Activated CD4-positive, alpha-beta memory T cell treated with anti-CD3 and anti-CD28 coated beads for 36 hours (primary cell): ENCODE measurements at regions of chr3 and their contacts with region 1.

Region 1: GRCh38 chr3:151086484-151087456 is 1.3 kb downstream of the MED12L start:
- DNase-seq: peak; percentile 86
- H3K4me3 Mint-ChIP-seq: peak overlapping the region; percentile 80
- H3K27ac Mint-ChIP-seq: no peak overlapping the region
- H3K4me1 Mint-ChIP-seq: peaks cover 11% of the 10 kb centered on the region
- H3K27me3 Mint-ChIP-seq: peaks cover 27% of the 10 kb centered on the region

Region 2: GRCh38 chr3:150528354-150528797 is 558.4 kb before region 1 on chr3:
- CTCF ChIA-PET with region 1: no interaction called
- POLR2A ChIA-PET with region 1: no interaction called
- intact Hi-C with region 1: loop called (anchors 2 kb)
- DNase-seq: no peak
- H3K4me3 Mint-ChIP-seq: no peak overlapping the region
- H3K27ac Mint-ChIP-seq: no peak overlapping the region
- H3K4me1 Mint-ChIP-seq: peaks cover 6% of the 10 kb centered on the region
- H3K27me3 Mint-ChIP-seq: no peaks in the 10 kb centered on the region

Region 3: DNA sequence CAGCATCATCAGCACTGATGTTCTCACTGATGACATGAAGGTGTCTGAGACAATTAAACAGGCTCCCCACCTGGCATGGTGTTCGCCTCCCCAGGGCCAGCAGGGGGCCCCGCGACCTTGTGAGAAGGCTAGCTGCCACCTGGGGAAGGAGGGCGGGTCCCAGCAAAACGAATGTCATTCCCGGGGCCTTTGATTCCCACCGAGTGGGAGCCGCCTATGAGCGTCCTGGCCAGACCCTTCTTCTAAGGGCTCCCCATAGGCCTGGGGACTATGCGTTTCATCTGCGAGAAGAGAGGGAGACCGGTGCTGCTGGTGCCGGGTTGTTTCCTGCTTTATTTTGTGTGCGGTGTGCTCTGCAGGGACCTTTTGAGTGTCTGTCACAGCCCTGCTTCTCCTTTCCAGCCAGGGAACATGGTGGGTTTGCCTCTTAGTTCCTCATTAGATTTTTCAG is 161.0 kb before region 1 on chr3:
- CTCF ChIA-PET with region 1: interaction called, 17 read pairs
- POLR2A ChIA-PET with region 1: no interaction called
- intact Hi-C with region 1: loop called (anchors 1 kb)
- DNase-seq: peak; percentile 68
- H3K4me3 Mint-ChIP-seq: no peak overlapping the region
- H3K27ac Mint-ChIP-seq: no peak overlapping the region
- H3K4me1 Mint-ChIP-seq: peaks cover 2% of the 10 kb centered on the region
- H3K27me3 Mint-ChIP-seq: peaks cover 11% of the 10 kb centered on the region

Region 4: DNA sequence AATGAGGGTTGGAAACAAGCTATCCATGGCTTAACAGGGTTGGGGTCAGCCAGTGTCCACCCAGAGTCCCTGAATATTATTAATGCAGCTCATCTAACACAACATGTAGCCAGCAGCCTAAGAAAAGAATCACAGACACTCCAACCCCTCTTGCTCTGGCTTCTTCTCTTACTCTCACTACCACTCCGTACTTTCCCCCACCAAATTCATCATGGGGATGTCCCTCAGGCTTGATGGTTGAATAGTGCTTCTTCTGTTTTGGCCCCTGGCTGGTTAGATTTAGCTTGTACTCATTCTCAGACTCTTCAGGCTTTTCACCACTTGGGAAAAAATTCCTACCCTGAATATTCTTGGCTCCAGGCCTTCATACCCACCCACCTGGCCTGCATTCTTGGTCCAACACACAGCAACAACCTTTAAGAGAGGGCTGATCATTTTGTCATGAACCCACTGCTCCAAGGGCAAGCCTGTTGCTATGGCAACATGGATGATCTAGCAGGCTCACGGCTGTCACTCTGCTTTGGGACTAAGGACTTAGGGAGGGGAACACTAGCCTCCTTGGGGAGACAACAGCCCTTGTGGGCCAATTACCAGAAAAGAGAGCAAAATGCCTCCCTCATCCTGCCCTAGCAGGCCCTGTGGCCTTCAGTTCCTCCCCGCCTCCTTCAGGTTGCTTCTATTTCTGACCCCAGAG is 10.8 kb before region 1 on chr3:
- CTCF ChIA-PET with region 1: interaction called, 11 read pairs
- POLR2A ChIA-PET with region 1: no interaction called
- intact Hi-C with region 1: no loop called
- DNase-seq: no peak
- H3K4me3 Mint-ChIP-seq: no peak overlapping the region
- H3K27ac Mint-ChIP-seq: no peak overlapping the region
- H3K4me1 Mint-ChIP-seq: no peaks in the 10 kb centered on the region
- H3K27me3 Mint-ChIP-seq: peaks cover 2% of the 10 kb centered on the region

Region 5: DNA sequence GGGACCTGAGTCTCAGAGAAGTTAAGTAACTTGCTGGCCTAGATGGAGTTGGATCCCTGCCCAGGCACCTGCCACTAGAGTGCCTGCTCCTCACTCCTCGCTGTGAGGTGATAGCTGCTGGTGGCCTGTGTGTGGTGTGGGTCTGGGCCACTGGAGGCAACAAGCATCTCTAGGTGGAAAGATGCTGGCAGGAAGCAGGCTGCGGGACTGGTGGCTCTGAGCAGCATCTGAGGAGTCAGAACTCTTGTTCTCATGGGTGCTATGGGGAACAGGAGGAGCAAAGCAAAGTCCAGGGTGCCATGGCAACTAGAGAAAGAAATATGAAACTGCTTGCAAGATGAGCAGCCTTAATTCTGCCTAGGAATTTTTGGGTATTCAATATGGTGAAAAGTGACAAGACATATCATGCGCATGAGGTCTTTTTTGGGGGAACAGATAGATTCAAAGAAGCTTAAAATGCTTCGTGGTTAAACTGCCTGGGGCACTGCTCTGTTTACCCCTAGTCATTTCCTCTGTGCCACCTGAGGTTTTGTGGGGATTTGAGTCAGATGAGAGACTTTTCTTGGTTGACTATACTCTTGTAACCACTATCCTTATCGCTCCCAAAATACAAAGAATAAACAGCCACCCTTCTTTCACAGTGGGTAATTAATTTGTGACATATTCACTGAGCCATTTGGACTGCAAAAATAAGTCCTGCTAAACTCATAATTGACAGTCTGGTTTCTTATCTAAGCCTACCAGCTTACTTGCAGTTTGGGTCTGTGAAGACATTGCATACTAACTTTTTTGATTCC is 49.0 kb after region 1 on chr3:
- CTCF ChIA-PET with region 1: interaction called, 19 read pairs
- POLR2A ChIA-PET with region 1: no interaction called
- intact Hi-C with region 1: loop called (anchors 1 kb)
- DNase-seq: peak; percentile 76
- H3K4me3 Mint-ChIP-seq: peak overlapping the region; percentile 4
- H3K27ac Mint-ChIP-seq: peak overlapping the region; percentile 75
- H3K4me1 Mint-ChIP-seq: peaks cover 23% of the 10 kb centered on the region
- H3K27me3 Mint-ChIP-seq: no peaks in the 10 kb centered on the region

Region 6: GRCh38 chr3:151146071-151146730 is 59.4 kb after region 1 on chr3:
- CTCF ChIA-PET with region 1: interaction called, 31 read pairs
- POLR2A ChIA-PET with region 1: no interaction called
- intact Hi-C with region 1: loop called (anchors 1 kb)
- DNase-seq: peak; percentile 70
- H3K4me3 Mint-ChIP-seq: no peak overlapping the region
- H3K27ac Mint-ChIP-seq: no peak overlapping the region
- H3K4me1 Mint-ChIP-seq: no peaks in the 10 kb centered on the region
- H3K27me3 Mint-ChIP-seq: no peaks in the 10 kb centered on the region

Region 7: DNA sequence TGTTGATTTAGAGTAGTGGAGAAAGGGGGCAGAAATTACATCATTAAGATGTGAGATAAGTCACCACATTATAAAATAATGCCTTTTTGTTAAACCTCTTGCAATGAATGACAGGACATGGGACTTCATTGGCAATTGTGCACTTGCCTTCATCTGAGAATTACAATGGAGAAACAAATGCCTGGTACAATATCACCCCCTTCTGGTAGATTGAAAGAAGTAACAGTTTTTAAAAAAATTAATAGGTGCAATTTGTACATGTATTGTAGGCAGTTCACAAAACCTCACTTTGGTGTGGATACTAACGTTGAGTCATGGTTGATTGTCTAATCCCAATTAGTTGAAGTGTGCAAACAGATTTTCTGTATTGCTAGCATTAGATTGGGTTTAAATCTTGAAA is 196.2 kb after region 1 on chr3:
- CTCF ChIA-PET with region 1: interaction called, 3 read pairs
- POLR2A ChIA-PET with region 1: no interaction called
- intact Hi-C with region 1: loop called (anchors 2 kb)
- DNase-seq: no peak
- H3K4me3 Mint-ChIP-seq: no peak overlapping the region
- H3K27ac Mint-ChIP-seq: peak overlapping the region; percentile 62
- H3K4me1 Mint-ChIP-seq: peaks cover 32% of the 10 kb centered on the region
- H3K27me3 Mint-ChIP-seq: no peaks in the 10 kb centered on the region